Activated CD4-positive, alpha-beta memory T cell treated with anti-CD3 and anti-CD28 coated beads, Interleukin-2, amount 10 ng/mL, durations not matched to agents 7 days and 5 days (primary cell): ENCODE measurements at regions of chr15 and their contacts with region 1.

Region 1: GRCh38 chr15:80776420-80777045 is 2.6 kb upstream of the CEMIP start:
- DNase-seq: peak; percentile 59
- H3K4me3 Mint-ChIP-seq: no peak overlapping the region
- H3K27ac Mint-ChIP-seq: no peak overlapping the region
- H3K4me1 Mint-ChIP-seq: peaks cover 13% of the 10 kb centered on the region
- H3K27me3 Mint-ChIP-seq: peaks cover 47% of the 10 kb centered on the region

Region 2: DNA sequence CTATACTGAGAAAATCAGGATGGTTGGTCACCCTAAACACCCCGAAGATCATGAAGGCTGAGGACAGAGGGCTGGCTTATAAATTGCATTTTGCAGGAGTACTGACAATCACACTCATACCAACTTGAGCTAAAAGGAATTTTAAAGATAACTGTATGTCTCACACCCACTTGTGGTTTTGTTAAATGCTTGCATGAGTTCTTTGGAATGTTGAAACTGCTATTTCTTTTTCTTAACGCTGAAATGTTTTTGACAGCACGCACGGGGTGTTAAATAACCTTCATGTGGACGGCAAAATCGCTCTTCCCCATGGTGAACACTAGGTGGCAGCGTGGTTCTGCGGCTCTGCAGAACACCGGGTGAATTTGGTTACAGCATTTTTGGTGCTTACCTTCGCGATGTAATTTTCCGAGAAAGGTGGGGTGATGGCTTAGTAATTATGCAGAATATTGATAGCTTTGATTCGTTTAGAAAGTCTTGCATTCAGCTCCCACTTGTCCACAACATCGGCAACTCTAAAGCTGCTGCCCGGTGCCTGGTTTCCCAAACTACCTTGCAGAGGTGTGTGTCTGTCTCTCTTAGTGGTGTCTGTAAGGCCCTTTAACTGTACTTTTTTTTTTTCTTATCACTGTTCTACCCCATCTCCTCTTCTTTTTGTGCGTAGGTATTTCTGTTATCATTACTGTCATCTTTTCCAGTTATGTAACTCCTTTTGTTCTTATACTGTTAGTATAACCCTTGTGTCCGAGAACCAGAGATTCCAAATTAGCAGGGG is 320.7 kb before region 1 on chr15:
- CTCF ChIA-PET with region 1: interaction called, 55 read pairs
- POLR2A ChIA-PET with region 1: no interaction called
- DNase-seq: peak; percentile 61
- H3K4me3 Mint-ChIP-seq: no peak overlapping the region
- H3K27ac Mint-ChIP-seq: no peak overlapping the region
- H3K4me1 Mint-ChIP-seq: peaks cover 4% of the 10 kb centered on the region
- H3K27me3 Mint-ChIP-seq: peaks cover 12% of the 10 kb centered on the region

Region 3: DNA sequence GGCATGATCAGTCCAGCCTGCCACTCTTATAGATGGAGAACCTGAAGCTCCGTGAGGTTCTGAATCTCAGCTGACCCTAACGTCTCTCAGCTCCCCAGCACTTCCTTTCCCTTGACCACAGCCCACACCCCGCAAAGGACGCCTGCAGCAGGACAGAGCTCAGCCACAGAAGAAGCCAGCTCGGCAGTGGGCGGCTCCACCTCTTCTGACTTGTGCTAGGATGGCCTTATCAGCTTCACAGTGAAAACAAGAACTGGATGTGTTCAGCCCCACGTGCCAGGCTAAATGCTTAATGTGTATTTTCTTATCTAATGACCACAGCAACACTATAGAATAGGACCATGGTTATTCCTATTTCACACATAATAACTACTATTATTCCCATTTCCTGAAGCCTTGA is 244.7 kb before region 1 on chr15:
- CTCF ChIA-PET with region 1: no interaction called
- POLR2A ChIA-PET with region 1: no interaction called
- DNase-seq: no peak
- H3K4me3 Mint-ChIP-seq: no peak overlapping the region
- H3K27ac Mint-ChIP-seq: no peak overlapping the region
- H3K4me1 Mint-ChIP-seq: no peaks in the 10 kb centered on the region
- H3K27me3 Mint-ChIP-seq: peaks cover 19% of the 10 kb centered on the region

Region 4: DNA sequence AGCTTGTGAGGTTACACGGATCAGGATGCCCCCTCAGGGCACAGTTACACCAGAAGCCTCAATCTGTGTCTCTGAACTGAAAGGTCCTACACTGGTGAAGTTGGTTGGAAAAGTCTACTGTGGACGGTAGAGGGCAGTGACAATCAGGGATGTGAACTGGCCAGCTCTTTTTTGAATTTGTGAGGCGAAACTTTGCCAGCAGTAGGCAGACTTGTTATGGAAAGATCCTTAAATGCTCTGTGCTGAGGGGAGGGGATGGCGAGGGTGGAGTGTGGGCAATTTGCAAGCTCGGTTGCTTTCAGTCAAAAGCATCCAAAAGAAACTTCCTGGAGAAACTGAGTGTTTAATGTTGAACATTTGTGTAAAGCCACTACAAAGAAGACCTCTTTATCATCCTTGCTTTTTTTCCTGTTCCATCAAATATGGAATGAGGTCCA is 208.8 kb before region 1 on chr15:
- CTCF ChIA-PET with region 1: interaction called, 20 read pairs
- POLR2A ChIA-PET with region 1: no interaction called
- DNase-seq: peak; percentile 23
- H3K4me3 Mint-ChIP-seq: no peak overlapping the region
- H3K27ac Mint-ChIP-seq: no peak overlapping the region
- H3K4me1 Mint-ChIP-seq: peaks cover 5% of the 10 kb centered on the region
- H3K27me3 Mint-ChIP-seq: peaks cover 19% of the 10 kb centered on the region

Region 5: GRCh38 chr15:80766275-80766674 is 10.3 kb before region 1 on chr15:
- CTCF ChIA-PET with region 1: interaction called, 17 read pairs
- POLR2A ChIA-PET with region 1: no interaction called
- DNase-seq: no peak
- H3K4me3 Mint-ChIP-seq: no peak overlapping the region
- H3K27ac Mint-ChIP-seq: no peak overlapping the region
- H3K4me1 Mint-ChIP-seq: no peaks in the 10 kb centered on the region
- H3K27me3 Mint-ChIP-seq: peaks cover 2% of the 10 kb centered on the region

Region 6: DNA sequence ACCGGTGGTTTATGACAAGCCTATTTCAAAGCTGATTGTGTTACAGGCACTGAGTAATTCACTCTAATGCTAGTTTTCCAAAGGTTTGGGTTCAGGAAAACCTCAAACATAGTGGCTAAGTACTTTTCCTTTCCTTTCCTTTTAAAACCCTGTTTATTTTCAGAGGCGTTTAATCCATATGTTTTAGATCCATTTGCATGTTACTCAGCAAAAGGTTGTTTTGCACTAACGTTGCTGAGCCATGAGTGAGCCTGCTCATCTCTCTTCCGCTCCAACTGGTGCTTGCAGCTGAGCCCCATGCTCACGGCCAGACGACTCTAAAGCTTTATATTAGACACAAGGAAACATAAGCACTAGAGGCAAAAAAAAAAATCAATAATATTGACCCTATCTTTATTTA is 12.0 kb after region 1 on chr15:
- CTCF ChIA-PET with region 1: interaction called, 31 read pairs
- POLR2A ChIA-PET with region 1: no interaction called
- DNase-seq: no peak
- H3K4me3 Mint-ChIP-seq: no peak overlapping the region
- H3K27ac Mint-ChIP-seq: no peak overlapping the region
- H3K4me1 Mint-ChIP-seq: peaks cover 12% of the 10 kb centered on the region
- H3K27me3 Mint-ChIP-seq: peaks cover 20% of the 10 kb centered on the region

Region 7: DNA sequence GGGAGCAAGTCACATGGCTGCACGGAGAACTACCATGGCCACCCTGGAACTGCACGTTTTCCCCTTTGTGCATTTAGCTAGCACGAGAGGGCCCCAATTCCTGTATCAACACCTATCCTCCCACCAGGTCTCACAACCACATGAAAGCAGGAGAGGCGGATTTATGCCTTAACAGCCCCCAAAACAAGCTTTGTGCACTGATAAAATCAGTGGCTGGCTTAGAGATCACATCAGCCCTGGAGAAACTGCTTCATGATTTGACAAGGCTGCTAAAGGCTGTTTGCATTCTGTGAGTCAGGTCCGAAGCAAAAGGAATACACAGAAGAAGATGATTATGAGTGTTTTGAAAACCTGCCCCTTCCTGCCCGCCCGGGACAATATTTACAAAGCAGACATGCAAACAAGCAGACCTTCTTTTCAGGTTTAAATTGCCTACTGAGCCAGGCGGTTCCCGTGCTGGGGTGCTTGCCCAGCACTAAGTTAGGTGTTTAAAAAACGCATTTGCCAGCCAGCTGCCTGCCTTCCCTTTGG is 28.5 kb after region 1 on chr15:
- CTCF ChIA-PET with region 1: interaction called, 20 read pairs
- POLR2A ChIA-PET with region 1: no interaction called
- DNase-seq: no peak
- H3K4me3 Mint-ChIP-seq: no peak overlapping the region
- H3K27ac Mint-ChIP-seq: no peak overlapping the region
- H3K4me1 Mint-ChIP-seq: peaks cover 19% of the 10 kb centered on the region
- H3K27me3 Mint-ChIP-seq: peaks cover 3% of the 10 kb centered on the region

Region 8: GRCh38 chr15:80970018-80970658 is 193.6 kb after region 1 on chr15:
- CTCF ChIA-PET with region 1: interaction called, 16 read pairs
- POLR2A ChIA-PET with region 1: no interaction called
- DNase-seq: peak; percentile 62
- H3K4me3 Mint-ChIP-seq: no peak overlapping the region
- H3K27ac Mint-ChIP-seq: no peak overlapping the region
- H3K4me1 Mint-ChIP-seq: peaks cover 7% of the 10 kb centered on the region
- H3K27me3 Mint-ChIP-seq: no peaks in the 10 kb centered on the region